Activated CD4-positive, alpha-beta T cell treated with anti-CD3 and anti-CD28 coated beads, Interleukin-2, amount 10 ng/mL, durations not matched to agents 24 days and 14 days (primary cell): ENCODE measurements at regions of chr4 and their contacts with region 1.

Region 1: GRCh38 chr4:53365486-53366300 is at the start of gene SCFD2:
- DNase-seq: peak; percentile 99
- H3K4me3 Mint-ChIP-seq: peak within 1 kb of the TSS; percentile 98
- H3K27ac Mint-ChIP-seq: peak within 1 kb of the TSS; percentile 95
- H3K4me1 Mint-ChIP-seq: peaks cover 33% of the 10 kb centered on the region
- H3K27me3 Mint-ChIP-seq: peaks cover 15% of the 10 kb centered on the region
- total RNA-seq, gene SCFD2: 35.0 and 39.9 TPM in 2 replicates

Region 2: DNA sequence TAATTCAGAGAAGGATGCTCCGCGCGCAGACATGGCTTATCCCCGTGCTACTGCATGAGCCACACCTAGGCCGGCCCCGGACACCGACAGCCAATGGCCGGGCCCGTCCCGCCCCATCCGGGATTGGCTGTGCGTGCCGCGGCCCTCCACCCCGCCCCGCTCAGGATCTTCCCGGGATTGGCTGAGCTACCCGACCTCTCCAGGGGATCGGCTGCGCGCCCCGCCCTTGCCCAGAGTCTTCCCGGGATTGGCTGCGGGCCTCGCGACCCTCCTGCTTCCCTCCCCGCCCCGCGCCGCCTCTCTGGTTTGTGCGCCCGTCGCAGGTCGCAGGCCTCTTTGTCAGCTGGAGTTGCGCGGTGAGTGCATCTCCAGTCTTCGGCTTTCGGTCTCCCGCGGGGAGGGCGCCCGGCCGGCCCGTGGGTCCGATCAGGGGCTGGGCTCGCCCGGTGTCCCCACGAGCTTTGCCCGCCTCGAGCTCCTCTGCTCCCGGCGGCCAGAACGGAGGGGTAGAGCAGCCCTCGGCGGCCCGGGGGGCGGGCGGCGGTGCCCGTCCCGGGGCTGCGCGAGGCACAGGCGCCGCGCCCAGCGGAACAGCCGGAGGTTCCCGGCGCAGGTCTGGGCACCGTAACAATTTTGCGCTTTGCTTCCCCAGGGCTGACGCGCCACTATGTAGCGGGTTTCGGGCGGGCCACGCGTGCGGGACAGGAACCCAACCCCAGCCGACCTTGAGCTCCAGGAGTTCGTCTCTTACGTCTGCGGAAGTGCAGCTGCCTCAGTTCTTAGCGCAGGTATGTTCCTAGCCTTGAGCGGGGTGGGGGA is 653.3 kb before region 1 on chr4:
- intact Hi-C with region 1: loop called (anchors 2 kb)
- DNase-seq: peak; percentile 99
- H3K4me3 Mint-ChIP-seq: peak overlapping the region; percentile 98
- H3K27ac Mint-ChIP-seq: peak overlapping the region; percentile 99
- H3K4me1 Mint-ChIP-seq: peaks cover 48% of the 10 kb centered on the region
- H3K27me3 Mint-ChIP-seq: no peaks in the 10 kb centered on the region

Region 3: DNA sequence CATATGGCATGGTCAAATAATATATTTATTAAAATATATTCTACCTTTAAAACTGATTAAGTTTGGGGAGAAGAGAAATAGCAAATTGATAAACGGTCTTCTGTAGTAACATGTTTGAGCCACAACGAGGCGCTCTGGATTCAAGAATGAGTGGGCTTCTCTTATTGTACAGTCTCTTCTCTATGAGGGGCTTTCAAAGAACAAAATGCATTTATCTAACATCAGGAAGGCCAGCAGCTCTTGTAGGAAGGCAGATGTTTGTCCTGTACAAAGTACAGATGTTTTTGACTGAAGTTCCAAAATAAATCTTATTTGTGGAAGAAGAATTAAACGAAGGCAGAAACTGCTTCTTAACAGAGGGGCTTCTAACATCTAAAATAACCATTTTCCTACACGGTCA is 350.0 kb before region 1 on chr4:
- intact Hi-C with region 1: loop called (anchors 10 kb)
- DNase-seq: no peak
- H3K4me3 Mint-ChIP-seq: no peak overlapping the region
- H3K27ac Mint-ChIP-seq: peak overlapping the region; percentile 21
- H3K4me1 Mint-ChIP-seq: peaks cover 25% of the 10 kb centered on the region
- H3K27me3 Mint-ChIP-seq: no peaks in the 10 kb centered on the region

Region 4: GRCh38 chr4:53103481-53103880 is 262.2 kb before region 1 on chr4:
- intact Hi-C with region 1: no loop called
- DNase-seq: no peak
- H3K4me3 Mint-ChIP-seq: no peak overlapping the region
- H3K27ac Mint-ChIP-seq: no peak overlapping the region
- H3K4me1 Mint-ChIP-seq: peaks cover 14% of the 10 kb centered on the region
- H3K27me3 Mint-ChIP-seq: no peaks in the 10 kb centered on the region

Region 5: DNA sequence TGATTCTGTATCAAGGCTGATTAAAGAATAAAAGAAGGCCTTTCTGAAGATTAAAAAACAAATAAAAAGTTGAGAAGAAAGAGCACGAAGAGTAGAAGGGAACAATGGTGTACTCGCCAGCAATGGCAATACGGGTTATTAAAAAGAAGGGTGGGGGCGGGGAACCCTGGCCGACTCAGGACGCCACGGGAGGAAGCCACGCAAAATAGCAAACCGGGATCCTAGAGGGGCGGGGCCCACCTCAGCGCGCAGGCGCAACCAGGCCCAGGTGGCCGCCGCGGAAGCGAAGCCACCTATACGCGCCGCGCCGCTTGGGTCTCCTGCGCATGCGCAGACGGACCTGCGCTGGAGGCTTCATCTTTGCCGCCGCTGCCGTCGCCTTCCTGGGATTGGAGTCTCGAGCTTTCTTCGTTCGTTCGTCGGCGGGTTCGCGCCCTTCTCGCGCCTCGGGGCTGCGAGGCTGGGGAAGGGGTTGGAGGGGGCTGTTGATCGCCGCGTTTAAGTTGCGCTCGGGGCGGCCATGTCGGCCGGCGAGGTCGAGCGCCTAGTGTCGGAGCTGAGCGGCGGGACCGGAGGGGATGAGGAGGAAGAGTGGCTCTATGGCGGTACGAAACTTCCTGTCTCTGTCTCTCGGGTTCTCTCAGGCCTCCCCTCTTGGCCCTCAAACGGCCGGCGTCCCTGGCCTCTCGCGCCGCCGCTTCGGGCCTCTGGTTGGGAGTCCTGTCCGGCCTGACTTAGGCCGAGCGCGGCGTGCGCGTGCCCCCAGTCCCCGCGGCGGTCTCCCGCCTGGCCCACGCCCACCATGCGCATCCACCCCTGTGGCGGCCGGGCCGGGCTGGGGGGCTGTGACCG is 11.9 kb after region 1 on chr4 and contains the start of gene FIP1L1:
- intact Hi-C with region 1: loop called (anchors 1 kb)
- DNase-seq: peak; percentile 99
- H3K4me3 Mint-ChIP-seq: peak within 1 kb of the TSS; percentile 99
- H3K27ac Mint-ChIP-seq: peak within 1 kb of the TSS; percentile 98
- H3K4me1 Mint-ChIP-seq: peaks cover 26% of the 10 kb centered on the region
- H3K27me3 Mint-ChIP-seq: peaks cover 6% of the 10 kb centered on the region
- total RNA-seq, gene FIP1L1: 111 and 114 TPM in 2 replicates